Psoas muscle (tissue), 8 donors: ENCODE measurements at regions of chr7 and their contacts with region 1.

Region 1: GRCh38 chr7:150631866-150632864 is at the start of gene GIMAP6:
- DNase-seq: no peak
- ATAC-seq: peak in 2 of 4 donors; percentile 42 to 51
- H3K4me3 ChIP-seq: peak within 1 kb of the TSS; percentile 64
- H3K27ac ChIP-seq: peak within 1 kb of the TSS; percentile 74
- H3K4me1 ChIP-seq: no peaks in the 10 kb centered on the region
- H3K27me3 ChIP-seq: no peaks in the 10 kb centered on the region
- CTCF ChIP-seq: no peak
- total RNA-seq, gene GIMAP6: 10.3 to 21.8 (median 14.0) TPM

Region 2: DNA sequence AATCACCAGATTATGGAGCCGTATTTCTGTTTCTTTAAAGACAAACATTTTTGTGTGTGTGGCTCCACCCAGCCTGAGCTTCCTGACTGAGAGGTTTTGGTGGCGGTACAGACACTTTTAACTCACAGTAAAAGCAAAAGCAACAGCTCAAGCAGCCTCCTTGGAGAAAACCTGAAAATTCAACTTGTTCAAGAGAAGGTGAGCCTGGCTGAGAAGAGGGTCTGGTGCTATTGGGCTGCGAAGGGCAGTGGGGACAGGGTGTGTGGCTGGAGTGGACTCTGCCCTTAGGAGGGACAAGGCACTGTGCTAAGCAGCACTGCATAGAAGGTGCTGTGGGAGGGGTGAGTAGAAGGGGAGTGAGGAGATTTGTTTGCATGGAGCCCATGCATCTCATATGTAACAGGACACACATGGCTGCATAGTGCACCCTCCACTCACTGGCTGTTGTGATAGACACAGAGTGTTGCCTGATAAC is 117.4 kb before region 1 on chr7 and contains the start of gene GIMAP7:
- intact Hi-C with region 1: loop called in 1 of 2 experiments (anchors 5 kb)
- DNase-seq: no peak
- ATAC-seq: peak in 1 of 4 donors; percentile 37
- H3K4me3 ChIP-seq: peak within 1 kb of the TSS; percentile 61
- H3K27ac ChIP-seq: peak within 1 kb of the TSS; percentile 39
- H3K4me1 ChIP-seq: no peaks in the 10 kb centered on the region
- H3K27me3 ChIP-seq: no peaks in the 10 kb centered on the region
- CTCF ChIP-seq: no peak
- total RNA-seq, gene GIMAP7: 10.7 to 17.7 (median 11.4) TPM

Region 3: DNA sequence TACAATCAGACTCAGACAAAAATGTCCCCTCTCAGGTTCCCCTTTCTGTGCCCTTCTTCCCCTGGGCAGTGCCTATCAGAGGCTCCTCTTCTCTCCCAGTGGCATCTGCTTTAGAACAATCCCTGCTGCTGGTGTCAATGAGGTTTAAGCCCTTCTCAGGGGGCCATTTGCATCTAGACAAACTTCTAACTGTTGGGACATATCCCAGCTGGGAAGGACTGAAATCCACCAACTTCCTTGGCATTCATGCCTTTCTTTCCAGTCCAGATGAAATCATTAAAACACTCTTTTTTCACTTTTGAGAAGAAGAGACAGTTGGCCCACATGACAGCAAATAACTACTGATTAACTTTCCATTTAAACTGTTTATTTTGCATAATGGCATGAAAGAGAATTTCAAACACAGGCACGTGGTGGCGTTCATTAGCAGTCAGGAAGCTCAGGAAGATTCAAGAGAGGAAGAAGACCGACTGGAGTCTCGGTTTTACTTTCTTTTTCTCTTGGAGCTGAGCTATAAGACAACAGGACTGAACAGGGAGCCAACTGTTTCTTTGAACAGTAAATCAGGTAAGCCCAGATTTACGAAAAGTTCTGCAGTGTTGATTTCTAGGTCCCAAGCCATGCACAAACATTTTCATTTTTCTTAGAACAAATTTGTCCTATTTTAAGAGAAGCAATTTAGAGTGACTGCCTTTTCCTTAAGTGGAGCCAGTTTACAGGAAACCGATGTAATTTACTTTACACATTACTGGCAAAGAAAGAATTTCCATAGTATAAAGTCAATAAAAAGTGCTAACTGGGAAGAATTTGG is 53.3 kb after region 1 on chr7 and contains the start of gene GIMAP2:
- intact Hi-C with region 1: no loop called
- DNase-seq: no peak
- ATAC-seq: no peak
- H3K4me3 ChIP-seq: peak within 1 kb of the TSS; percentile 56
- H3K27ac ChIP-seq: peak within 1 kb of the TSS; percentile 58
- H3K4me1 ChIP-seq: no peaks in the 10 kb centered on the region
- H3K27me3 ChIP-seq: no peaks in the 10 kb centered on the region
- CTCF ChIP-seq: no peak
- total RNA-seq, gene GIMAP2: 1.5 to 5.3 (median 2.8) TPM

Region 4: DNA sequence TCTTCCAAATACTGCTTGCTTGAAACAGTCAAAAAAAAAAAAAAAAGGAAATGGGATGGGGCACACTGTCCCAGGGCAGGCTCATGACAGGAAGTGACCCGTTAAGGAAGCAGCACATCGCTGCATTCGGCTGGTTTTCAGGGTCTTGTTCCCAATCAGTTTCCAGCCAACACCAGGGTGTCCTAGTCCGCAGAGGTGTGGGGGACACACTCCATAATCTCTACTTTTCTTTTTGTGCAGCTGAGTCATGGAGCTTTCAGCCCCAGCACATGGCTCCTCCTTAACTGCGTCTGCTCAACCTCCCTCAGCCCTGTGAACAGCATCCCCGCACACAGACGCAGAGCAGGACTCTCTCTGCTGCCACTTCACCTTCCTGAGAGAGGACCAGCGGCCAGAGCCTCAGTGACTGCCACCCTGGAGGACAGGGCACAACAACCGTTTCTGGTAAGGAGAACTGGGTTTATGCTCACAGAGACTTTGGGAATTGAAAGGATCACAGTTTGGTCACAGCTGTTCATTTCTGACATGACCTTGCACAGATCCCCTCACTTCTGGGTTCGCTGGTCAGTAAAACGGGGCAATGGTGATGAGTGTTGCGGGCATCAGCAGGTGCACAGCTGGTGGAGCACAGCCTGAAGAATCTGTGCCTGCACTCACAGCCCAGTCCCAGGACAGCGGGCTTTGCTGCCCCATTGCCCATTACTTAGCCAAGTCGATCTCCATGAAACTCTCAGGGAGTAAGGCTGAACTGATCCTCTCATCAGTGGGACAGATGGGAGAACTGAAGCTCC is 105.3 kb after region 1 on chr7 and contains the start of gene GIMAP5:
- intact Hi-C with region 1: loop called in 1 of 2 experiments (anchors 5 kb)
- DNase-seq: peak in 1 of 2 donors; percentile 53
- ATAC-seq: peak in 2 of 4 donors; percentile 49 to 51
- H3K4me3 ChIP-seq: peak within 1 kb of the TSS; percentile 63
- H3K27ac ChIP-seq: peak within 1 kb of the TSS; percentile 70
- H3K4me1 ChIP-seq: no peaks in the 10 kb centered on the region
- H3K27me3 ChIP-seq: no peaks in the 10 kb centered on the region
- CTCF ChIP-seq: no peak
- total RNA-seq, gene GIMAP5: 4.1 to 8.4 (median 7.7) TPM

Region 5: GRCh38 chr7:151168003-151168786 is 536.0 kb after region 1 on chr7:
- intact Hi-C with region 1: no loop called
- DNase-seq: peak; percentile 40 to 76
- ATAC-seq: peak; percentile 77 to 85 (median 78)
- H3K4me3 ChIP-seq: peak overlapping the region; percentile 66
- H3K27ac ChIP-seq: no peak overlapping the region
- H3K4me1 ChIP-seq: peaks cover 12% of the 10 kb centered on the region
- H3K27me3 ChIP-seq: peaks cover 0 to 21% (median 0%) of the 10 kb centered on the region in 3 donors
- CTCF ChIP-seq: peak; percentile 72